Activated T-helper 1 cell treated with anti-CD3 and anti-CD28 coated beads, Interleukin-12 subunit alpha, Interleukin-12 subunit beta, Interleukin-2, Interleukin-4 antibody, amounts not matched to agents 30 ng/mL and 10 ng/mL and 1 ng/mL, durations not matched to agents 14 hours and 24 hours and 36 hours (primary cell): ENCODE measurements at regions of chr7 and their contacts with region 1.

Region 1: DNA sequence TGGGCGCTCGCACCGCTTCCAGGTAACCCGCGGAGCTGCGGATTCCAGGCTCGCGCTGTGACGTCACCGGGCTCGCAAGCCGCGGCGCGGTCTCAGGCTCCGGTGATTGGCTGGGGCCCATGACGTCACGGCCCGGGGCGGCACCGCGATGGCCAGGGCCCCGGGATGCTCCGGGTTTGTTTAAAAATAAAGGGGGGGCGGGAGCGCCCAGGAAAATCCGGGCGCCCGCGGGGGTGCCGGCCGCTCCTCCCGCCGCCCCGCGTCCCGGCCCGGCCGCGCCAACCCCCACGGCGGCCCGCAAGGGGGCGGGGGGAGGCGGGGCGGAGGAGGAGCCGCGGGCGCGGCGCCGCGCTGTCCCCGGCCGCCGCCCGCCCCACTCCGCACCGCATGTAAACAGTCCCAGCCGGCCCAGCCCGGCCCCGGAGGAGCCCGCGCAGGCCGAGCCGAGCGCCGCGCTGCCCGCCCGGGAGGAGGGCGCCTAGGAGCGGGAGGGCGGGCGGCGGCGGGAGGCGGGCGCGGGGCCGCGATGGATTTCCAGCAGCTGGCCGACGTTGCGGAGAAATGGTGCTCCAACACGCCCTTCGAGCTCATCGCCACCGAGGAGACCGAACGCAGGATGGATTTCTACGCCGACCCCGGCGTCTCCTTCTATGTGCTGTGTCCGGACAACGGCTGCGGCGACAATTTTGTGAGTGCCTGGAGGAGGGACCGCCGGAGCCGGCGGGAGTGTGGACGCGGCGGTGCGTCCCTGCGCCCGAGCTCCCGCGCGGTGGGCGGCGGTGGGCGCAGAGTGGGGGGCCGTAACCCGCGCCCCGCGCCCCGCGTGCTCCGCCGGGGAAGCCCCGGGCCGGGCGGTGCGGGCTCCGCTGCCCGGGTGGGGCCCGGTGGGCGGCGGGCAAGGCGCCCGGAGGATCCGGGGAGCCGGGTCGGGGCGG is at the start of gene MTURN:
- DNase-seq: peak; percentile 83
- H3K4me3 Mint-ChIP-seq: peak within 1 kb of the TSS; percentile 89
- H3K27ac Mint-ChIP-seq: peak within 1 kb of the TSS; percentile 80
- H3K4me1 Mint-ChIP-seq: peaks cover 6% of the 10 kb centered on the region
- H3K27me3 Mint-ChIP-seq: peaks cover 17% of the 10 kb centered on the region
- total RNA-seq, gene MTURN: 3.9 and 4.3 TPM in 2 replicates

Region 2: GRCh38 chr7:30164567-30164966 is 29.7 kb after region 1 on chr7:
- intact Hi-C with region 1: loop called (anchors 1 kb)
- DNase-seq: no peak
- H3K4me3 Mint-ChIP-seq: no peak overlapping the region
- H3K27ac Mint-ChIP-seq: no peak overlapping the region
- H3K4me1 Mint-ChIP-seq: peaks cover 45% of the 10 kb centered on the region
- H3K27me3 Mint-ChIP-seq: peaks cover 3% of the 10 kb centered on the region

Region 3: GRCh38 chr7:30478349-30479201 is 343.7 kb after region 1 on chr7 and contains the start of gene NOD1:
- intact Hi-C with region 1: loop called (anchors 2 kb)
- DNase-seq: peak; percentile 71
- H3K4me3 Mint-ChIP-seq: peak within 1 kb of the TSS; percentile 90
- H3K27ac Mint-ChIP-seq: peak within 1 kb of the TSS; percentile 91
- H3K4me1 Mint-ChIP-seq: peaks cover 61% of the 10 kb centered on the region
- H3K27me3 Mint-ChIP-seq: no peaks in the 10 kb centered on the region
- total RNA-seq, gene NOD1: 9.1 and 13.1 TPM in 2 replicates